Activated naive CD4-positive, alpha-beta T cell treated with anti-CD3 and anti-CD28 coated beads for 36 hours (primary cell): ENCODE measurements at regions of chr5 and their contacts with region 1.

Region 1: GRCh38 chr5:140401362-140402257 is at the start of gene ANKHD1:
- DNase-seq: peak; percentile 99
- H3K4me3 Mint-ChIP-seq: no peak within 1 kb of the TSS
- H3K27ac Mint-ChIP-seq: no peak within 1 kb of the TSS
- H3K4me1 Mint-ChIP-seq: peaks cover 37% of the 10 kb centered on the region
- H3K27me3 Mint-ChIP-seq: no peaks in the 10 kb centered on the region
- total RNA-seq, gene ANKHD1: 83.2 to 87.0 TPM

Region 2: GRCh38 chr5:139560752-139561654 is 840.6 kb before region 1 on chr5 and contains the start of gene UBE2D2:
- CTCF ChIA-PET with region 1: no interaction called
- intact Hi-C with region 1: loop called (anchors 5 kb)
- DNase-seq: peak; percentile 98
- H3K4me3 Mint-ChIP-seq: peak within 1 kb of the TSS; percentile 94
- H3K27ac Mint-ChIP-seq: peak within 1 kb of the TSS; percentile 96
- H3K4me1 Mint-ChIP-seq: peaks cover 33% of the 10 kb centered on the region
- H3K27me3 Mint-ChIP-seq: no peaks in the 10 kb centered on the region
- total RNA-seq, gene UBE2D2: 221 to 243 TPM

Region 3: DNA sequence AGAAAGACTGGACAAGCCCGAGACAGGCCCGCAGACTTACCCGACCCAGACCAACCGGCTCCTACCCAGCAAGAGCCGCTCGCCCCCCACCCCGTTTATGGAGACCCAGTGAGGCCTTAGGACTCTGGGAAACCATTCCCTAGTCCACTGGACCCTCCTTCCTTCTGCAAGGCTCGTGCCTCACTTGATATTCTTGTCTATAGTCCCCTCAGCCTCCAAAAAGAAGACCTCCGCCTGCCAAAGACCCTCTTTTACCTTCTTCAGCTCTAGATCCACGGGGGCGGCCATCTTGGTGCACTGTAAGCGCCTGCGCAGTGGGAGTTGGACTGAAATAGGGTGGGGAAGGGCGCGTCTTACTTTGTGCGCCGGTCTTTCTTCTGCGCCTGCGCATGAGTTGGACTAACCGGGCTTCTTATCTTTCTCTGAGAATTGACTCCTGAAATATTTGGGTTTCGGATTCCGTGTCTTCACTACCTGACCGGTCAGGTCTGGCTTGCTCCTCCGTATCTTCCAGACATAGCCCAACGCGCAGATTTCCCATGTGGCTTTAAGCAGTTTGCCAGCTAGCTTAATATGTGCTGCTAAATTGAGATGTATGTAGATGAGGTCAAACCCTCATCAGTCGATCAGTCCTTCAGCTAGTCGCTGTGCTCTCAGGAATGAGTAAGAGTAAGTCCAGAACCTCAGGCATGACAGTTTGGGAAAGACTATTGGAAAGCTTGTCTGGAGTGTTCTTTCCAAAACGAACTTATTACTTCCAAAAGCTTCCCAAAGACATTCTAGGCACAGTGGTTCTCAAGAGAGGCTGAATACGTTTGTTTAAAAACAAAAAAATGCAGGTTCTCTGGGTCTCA is 98.6 kb before region 1 on chr5 and contains the start of gene PFDN1:
- CTCF ChIA-PET with region 1: no interaction called
- intact Hi-C with region 1: loop called (anchors 2 kb)
- DNase-seq: peak; percentile 95
- H3K4me3 Mint-ChIP-seq: peak within 1 kb of the TSS; percentile 99
- H3K27ac Mint-ChIP-seq: peak within 1 kb of the TSS; percentile 91
- H3K4me1 Mint-ChIP-seq: peaks cover 20% of the 10 kb centered on the region
- H3K27me3 Mint-ChIP-seq: no peaks in the 10 kb centered on the region
- total RNA-seq, gene PFDN1: 50.6 to 57.1 TPM

Region 4: GRCh38 chr5:140381972-140382371 is 19.6 kb before region 1 on chr5:
- CTCF ChIA-PET with region 1: no interaction called
- intact Hi-C with region 1: loop called (anchors 1 kb)
- DNase-seq: peak; percentile 45
- H3K4me3 Mint-ChIP-seq: no peak overlapping the region
- H3K27ac Mint-ChIP-seq: peak overlapping the region; percentile 11
- H3K4me1 Mint-ChIP-seq: peaks cover 16% of the 10 kb centered on the region
- H3K27me3 Mint-ChIP-seq: no peaks in the 10 kb centered on the region

Region 5: DNA sequence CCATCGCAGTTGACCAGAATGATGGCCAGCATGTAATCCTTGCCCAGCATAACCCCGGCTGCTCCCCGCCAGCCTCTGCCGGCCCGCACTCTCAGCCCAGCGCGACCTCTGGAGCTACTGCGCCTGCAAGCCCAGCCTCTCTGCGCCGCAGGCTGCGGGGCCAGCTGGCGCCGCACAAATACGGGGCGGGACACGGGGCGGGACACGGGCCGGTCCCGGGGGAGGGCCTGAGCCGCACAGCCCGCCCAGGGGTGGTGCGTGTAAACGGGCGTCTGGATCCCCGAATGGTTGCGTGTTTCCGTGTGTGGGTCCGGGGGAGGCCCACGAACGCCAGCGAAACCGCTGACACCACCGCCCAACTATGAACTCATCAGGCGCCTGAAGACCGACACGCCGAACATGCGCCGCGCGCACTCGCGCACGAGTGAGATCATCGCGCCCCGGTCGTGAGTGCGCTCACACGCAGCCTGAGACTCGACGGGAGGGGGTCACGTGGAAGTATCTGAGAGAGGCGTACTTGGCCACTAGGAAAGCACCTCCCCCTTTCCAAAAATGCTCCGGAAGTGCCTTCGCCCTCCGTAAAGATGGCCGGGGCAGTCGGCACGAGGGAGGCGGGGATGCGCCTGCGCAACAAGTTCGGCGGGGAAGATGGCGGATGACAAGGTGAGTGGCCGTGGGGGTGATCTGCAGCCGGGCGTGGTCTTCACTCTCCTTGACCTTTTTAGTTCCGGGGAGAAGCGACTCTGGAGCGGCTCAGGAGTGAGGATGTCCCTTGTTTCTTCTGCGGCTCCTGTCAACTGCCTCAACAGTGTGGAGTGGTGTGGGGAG is 162.8 kb after region 1 on chr5 and contains the starts of genes APBB3 and SLC35A4:
- CTCF ChIA-PET with region 1: no interaction called
- intact Hi-C with region 1: loop called (anchors 1 kb)
- DNase-seq: peak; percentile 97
- H3K4me3 Mint-ChIP-seq: peak within 1 kb of the TSS; percentile 96
- H3K27ac Mint-ChIP-seq: peak within 1 kb of the TSS; percentile 93
- H3K4me1 Mint-ChIP-seq: peaks cover 53% of the 10 kb centered on the region
- H3K27me3 Mint-ChIP-seq: no peaks in the 10 kb centered on the region
- total RNA-seq, gene APBB3: 15.4 to 16.5 TPM
- total RNA-seq, gene SLC35A4: 57.1 to 60.1 TPM

Region 6: GRCh38 chr5:140664359-140665119 is 262.9 kb after region 1 on chr5 and contains the start of gene WDR55:
- CTCF ChIA-PET with region 1: no interaction called
- intact Hi-C with region 1: loop called (anchors 1 kb)
- DNase-seq: peak; percentile 97
- H3K4me3 Mint-ChIP-seq: peak within 1 kb of the TSS; percentile 97
- H3K27ac Mint-ChIP-seq: peak within 1 kb of the TSS; percentile 91
- H3K4me1 Mint-ChIP-seq: peaks cover 33% of the 10 kb centered on the region
- H3K27me3 Mint-ChIP-seq: no peaks in the 10 kb centered on the region
- total RNA-seq, gene WDR55: 18.9 to 19.8 TPM

Region 7: GRCh38 chr5:140710899-140711552 is 309.4 kb after region 1 on chr5:
- CTCF ChIA-PET with region 1: no interaction called
- intact Hi-C with region 1: loop called (anchors 1 kb)
- DNase-seq: peak; percentile 94
- H3K4me3 Mint-ChIP-seq: peak overlapping the region; percentile 92
- H3K27ac Mint-ChIP-seq: peak overlapping the region; percentile 95
- H3K4me1 Mint-ChIP-seq: peaks cover 18% of the 10 kb centered on the region
- H3K27me3 Mint-ChIP-seq: peaks cover 3% of the 10 kb centered on the region